Tibial artery (tissue), 4 donors: ENCODE measurements at regions of chr1 and their contacts with region 1.

Region 1: DNA sequence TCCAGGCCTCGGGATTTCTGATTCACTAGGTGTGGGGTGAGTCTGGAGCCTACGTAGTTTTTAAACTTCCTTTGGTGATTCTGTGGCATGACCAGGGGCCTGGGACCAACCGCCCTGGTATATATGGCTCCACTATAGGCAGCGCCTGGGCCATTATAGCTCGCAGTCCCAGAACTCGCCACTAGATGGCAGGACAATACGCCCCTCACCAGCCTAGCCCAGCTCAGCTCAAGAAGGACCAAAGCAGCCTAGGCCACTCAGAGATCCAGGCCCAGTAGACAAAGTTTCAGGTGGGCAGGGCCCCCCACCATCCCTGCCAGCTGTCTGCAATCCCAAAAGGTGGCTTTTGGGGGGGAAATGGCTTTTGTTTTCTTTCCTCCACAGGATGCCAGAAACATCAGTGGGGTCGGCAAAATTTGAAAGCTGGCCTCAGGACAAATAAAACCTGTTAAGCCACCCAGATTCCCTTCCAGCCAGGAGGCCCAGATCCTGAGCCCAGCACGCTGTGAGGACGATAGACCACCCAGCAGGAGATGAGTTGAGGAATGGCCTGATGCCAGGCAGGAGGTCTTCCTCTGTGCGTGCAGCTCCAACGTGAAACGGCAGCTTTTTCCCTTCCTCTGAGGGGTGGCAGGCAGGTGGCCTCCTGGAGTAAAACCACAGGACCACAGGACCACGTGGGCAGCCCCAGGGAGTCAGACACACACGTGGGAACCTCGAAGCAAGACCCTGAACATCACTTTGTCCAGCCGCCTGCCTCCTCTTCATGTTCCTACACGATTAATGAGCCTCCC is 24.8 kb upstream of the TMEM51 start:
- DNase-seq: peak; percentile 43 to 77
- H3K4me3 ChIP-seq: no peak overlapping the region
- H3K27ac ChIP-seq: no peak overlapping the region
- H3K4me1 ChIP-seq: no peaks in the 10 kb centered on the region
- H3K27me3 ChIP-seq: no peaks in the 10 kb centered on the region
- CTCF ChIP-seq: peak; percentile 85 to 86

Region 2: DNA sequence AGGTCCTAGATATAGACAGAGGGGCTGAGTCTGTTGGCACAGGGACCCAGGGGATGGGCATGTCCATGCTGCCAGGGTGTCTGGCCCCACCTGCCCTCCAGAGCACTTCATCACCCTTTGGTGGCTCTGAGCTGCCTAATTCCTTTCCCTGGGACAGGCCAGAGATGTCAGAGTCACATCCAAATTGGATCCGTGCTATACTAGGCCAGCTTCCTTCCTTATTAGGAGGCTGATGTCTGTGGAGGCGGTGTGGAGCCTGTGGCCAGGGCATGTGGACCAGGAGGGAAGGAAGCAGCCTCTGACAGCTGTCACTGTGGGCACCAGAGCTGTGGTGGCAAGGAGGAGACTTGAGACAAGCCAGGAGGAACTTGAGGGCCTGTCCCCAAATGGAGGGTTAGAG is 52.9 kb before region 1 on chr1:
- intact Hi-C with region 1: no loop called
- DNase-seq: no peak
- H3K4me3 ChIP-seq: no peak overlapping the region
- H3K27ac ChIP-seq: peak overlapping the region; percentile 60 to 76
- H3K4me1 ChIP-seq: peaks cover 0 to 26% (median 6%) of the 10 kb centered on the region in 4 donors
- H3K27me3 ChIP-seq: no peaks in the 10 kb centered on the region
- CTCF ChIP-seq: no peak

Region 3: GRCh38 chr1:15146971-15147376 is 18.3 kb after region 1 on chr1:
- intact Hi-C with region 1: loop called (anchors 2 kb)
- DNase-seq: no peak
- H3K4me3 ChIP-seq: no peak overlapping the region
- H3K27ac ChIP-seq: no peak overlapping the region
- H3K4me1 ChIP-seq: peaks cover 0 to 11% (median 4%) of the 10 kb centered on the region in 4 donors
- H3K27me3 ChIP-seq: no peaks in the 10 kb centered on the region
- CTCF ChIP-seq: no peak

Region 4: GRCh38 chr1:15304701-15305467 is 176.2 kb after region 1 on chr1:
- intact Hi-C with region 1: loop called (anchors 5 kb)
- DNase-seq: peak in 1 of 2 donors; percentile 50
- H3K4me3 ChIP-seq: no peak overlapping the region
- H3K27ac ChIP-seq: no peak overlapping the region
- H3K4me1 ChIP-seq: no peaks in the 10 kb centered on the region
- H3K27me3 ChIP-seq: peaks cover 0 to 2% of the 10 kb centered on the region in 2 donors
- CTCF ChIP-seq: peak; percentile 71 to 81